Endothelial cell of umbilical vein (primary cell): ENCODE measurements at regions of chr15 and their contacts with region 1.

Region 1: GRCh38 chr15:88897456-88898194 is 2.3 kb upstream of the HAPLN3 start:
- DNase-seq: peak; percentile 84
- H3K4me3 ChIP-seq: no peak overlapping the region
- H3K27ac ChIP-seq: peak overlapping the region; percentile 74
- H3K4me1 ChIP-seq: peaks cover 36% of the 10 kb centered on the region
- H3K27me3 ChIP-seq: no peaks in the 10 kb centered on the region
- CTCF ChIP-seq: peak; percentile 42 to 62
- POLR2A ChIP-seq: peak; percentile 10

Region 2: GRCh38 chr15:88649286-88649733 is 248.3 kb before region 1 on chr15:
- CTCF ChIA-PET with region 1: no interaction called
- POLR2A ChIA-PET with region 1: no interaction called
- dilution Hi-C with region 1: no loop called
- intact Hi-C with region 1: loop called (anchors 5 kb)
- DNase-seq: peak; percentile 95
- H3K4me3 ChIP-seq: no peak overlapping the region
- H3K27ac ChIP-seq: peak overlapping the region; percentile 99
- H3K4me1 ChIP-seq: peaks cover 35% of the 10 kb centered on the region
- H3K27me3 ChIP-seq: no peaks in the 10 kb centered on the region
- CTCF ChIP-seq: no peak
- POLR2A ChIP-seq: no peak

Region 3: DNA sequence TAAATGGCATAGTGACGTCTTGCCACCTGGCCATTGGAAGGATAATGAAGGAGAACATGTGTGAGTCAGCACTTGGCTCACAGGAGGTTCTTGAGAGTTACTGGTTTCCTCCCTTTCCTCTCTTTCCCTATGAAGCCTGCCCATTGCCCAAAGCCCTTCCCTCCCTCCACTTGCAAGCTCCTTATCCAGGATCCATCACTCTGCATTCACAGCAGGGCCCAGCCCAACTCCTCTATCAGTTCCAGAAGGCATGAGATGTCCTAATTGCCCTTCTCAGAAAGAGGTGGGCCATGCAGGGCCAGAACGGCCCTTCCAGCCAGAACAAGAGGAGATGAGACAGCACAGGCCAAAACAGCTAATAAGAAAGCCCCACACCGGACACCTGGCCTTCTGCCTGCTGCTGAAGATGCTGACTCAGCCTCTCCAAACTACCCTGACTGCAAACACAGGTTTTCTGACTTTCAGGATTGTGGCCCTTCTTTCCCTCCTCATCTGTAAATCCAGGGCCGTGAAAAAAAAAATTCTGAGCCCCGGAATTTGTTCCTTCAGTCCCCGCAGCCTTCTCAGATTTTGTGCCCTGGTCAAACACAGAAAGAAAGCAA is 32.0 kb before region 1 on chr15:
- CTCF ChIA-PET with region 1: no interaction called
- POLR2A ChIA-PET with region 1: no interaction called
- dilution Hi-C with region 1: no loop called
- intact Hi-C with region 1: no loop called
- DNase-seq: peak; percentile 8
- H3K4me3 ChIP-seq: no peak overlapping the region
- H3K27ac ChIP-seq: no peak overlapping the region
- H3K4me1 ChIP-seq: peaks cover 6% of the 10 kb centered on the region
- H3K27me3 ChIP-seq: peaks cover 0 to 5% of the 10 kb centered on the region in 2 experiments
- CTCF ChIP-seq: no peak
- POLR2A ChIP-seq: no peak

Region 4: GRCh38 chr15:88878720-88879184 is 18.9 kb before region 1 on chr15:
- CTCF ChIA-PET with region 1: interaction called, 24 read pairs
- POLR2A ChIA-PET with region 1: no interaction called
- dilution Hi-C with region 1: no loop called
- intact Hi-C with region 1: loop called (anchors 1 kb)
- DNase-seq: peak; percentile 39
- H3K4me3 ChIP-seq: no peak overlapping the region
- H3K27ac ChIP-seq: no peak overlapping the region
- H3K4me1 ChIP-seq: no peaks in the 10 kb centered on the region
- H3K27me3 ChIP-seq: no peaks in the 10 kb centered on the region
- CTCF ChIP-seq: peak; percentile 72 to 87
- POLR2A ChIP-seq: no peak

Region 5: DNA sequence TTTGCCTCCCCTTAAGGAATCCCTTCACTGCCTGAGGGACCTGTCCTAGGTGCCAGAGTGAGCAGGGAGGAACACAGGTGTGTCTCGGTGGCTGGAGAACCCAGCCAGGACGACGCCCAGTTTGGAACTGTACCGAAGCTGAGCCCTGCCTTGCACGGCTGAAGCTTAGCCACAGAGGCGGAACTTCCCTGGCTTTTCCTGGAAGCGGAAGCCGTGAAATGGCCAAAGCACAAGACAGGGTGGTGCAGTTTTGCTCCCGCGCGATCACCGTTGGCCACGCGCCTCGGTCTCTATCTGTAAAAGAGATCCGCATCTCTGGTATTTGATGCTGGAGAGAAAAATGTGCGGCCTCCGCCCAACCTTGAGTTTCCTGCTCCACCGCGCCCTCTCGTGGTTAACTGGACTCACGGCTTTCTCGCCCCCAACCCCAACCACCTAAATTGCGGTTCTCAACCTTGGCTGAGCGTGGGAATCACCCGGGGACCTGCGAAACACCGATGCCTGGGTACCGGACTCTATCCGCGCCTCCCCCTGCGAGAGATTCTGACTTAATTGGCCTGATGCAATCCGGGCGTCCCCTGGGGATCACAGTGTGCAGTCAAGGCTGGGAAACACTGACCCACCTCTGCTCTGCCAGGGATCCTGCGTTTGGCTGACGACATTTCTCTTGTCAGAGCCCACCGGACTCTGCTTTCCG is 119.9 kb after region 1 on chr15:
- CTCF ChIA-PET with region 1: interaction called, 82 read pairs
- POLR2A ChIA-PET with region 1: no interaction called
- dilution Hi-C with region 1: no loop called
- intact Hi-C with region 1: loop called (anchors 1 kb)
- DNase-seq: peak; percentile 64
- H3K4me3 ChIP-seq: peak overlapping the region in 1 of 3 experiments; percentile 21
- H3K27ac ChIP-seq: no peak overlapping the region
- H3K4me1 ChIP-seq: no peaks in the 10 kb centered on the region
- H3K27me3 ChIP-seq: peaks cover 7 to 22% of the 10 kb centered on the region in 2 experiments
- CTCF ChIP-seq: peak; percentile 92
- POLR2A ChIP-seq: no peak

Region 6: GRCh38 chr15:89334510-89335288 is 437.1 kb after region 1 on chr15 and contains the start of gene POLG:
- CTCF ChIA-PET with region 1: no interaction called
- POLR2A ChIA-PET with region 1: no interaction called
- dilution Hi-C with region 1: no loop called
- intact Hi-C with region 1: loop called (anchors 5 kb)
- DNase-seq: peak; percentile 99
- H3K4me3 ChIP-seq: peak within 1 kb of the TSS; percentile 40 to 91 (median 71)
- H3K27ac ChIP-seq: peak within 1 kb of the TSS; percentile 11
- H3K4me1 ChIP-seq: peaks cover 28% of the 10 kb centered on the region
- H3K27me3 ChIP-seq: peaks cover 0 to 6% of the 10 kb centered on the region in 2 experiments
- CTCF ChIP-seq: no peak
- POLR2A ChIP-seq: peak; percentile 96
- total RNA-seq, gene POLG: 77.7 and 79.4 TPM in 2 replicates